MCF 10A (cell line): ENCODE measurements at regions of chr2 and their contacts with region 1.

Region 1: DNA sequence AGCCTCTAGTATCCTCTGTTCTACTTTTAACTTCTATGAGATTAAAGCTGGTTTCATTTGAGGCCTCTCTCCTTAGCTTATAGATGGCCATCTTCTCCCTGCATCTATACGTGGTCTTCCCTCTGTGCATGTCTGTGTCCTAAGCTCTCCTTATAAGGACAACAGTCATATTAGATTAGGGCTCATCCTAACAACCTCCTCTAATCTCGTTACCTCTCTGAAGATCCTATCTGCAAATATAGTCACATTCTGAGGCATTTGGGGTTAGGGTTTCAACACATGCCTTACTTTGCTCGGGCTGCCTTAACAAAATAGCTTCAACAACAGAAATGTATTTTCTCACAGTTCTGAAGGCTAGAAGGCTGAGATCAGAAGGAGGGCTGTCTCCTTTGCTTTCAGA is 11.6 kb upstream of the APOB start:
- DNase-seq: no peak
- H3K4me3 Mint-ChIP-seq: no peak overlapping the region
- H3K27ac Mint-ChIP-seq: no peak overlapping the region
- H3K4me1 Mint-ChIP-seq: no peaks in the 10 kb centered on the region
- H3K27me3 Mint-ChIP-seq: peaks cover 27% of the 10 kb centered on the region
- CTCF ChIP-seq: no peak

Region 2: DNA sequence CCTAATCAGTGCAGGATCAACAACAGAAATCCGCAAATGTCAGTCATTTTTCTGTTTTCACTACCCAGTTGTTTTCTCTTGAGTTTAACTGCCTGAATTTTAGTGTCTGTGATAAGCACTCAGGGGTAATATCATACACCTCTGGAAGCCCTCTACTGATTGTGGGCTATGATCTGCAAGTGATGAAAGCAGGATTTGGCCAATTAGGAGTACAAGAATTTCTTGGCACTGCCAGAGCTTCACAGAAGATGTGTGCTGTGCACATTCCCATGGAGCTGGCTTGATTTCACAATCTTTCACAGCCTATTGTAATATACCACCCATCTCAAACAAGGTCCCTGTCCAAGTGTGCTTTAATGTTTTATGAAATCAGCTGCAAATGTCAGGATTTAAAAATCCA is 41.0 kb after region 1 on chr2:
- CTCF ChIA-PET with region 1: no interaction called
- POLR2A ChIA-PET with region 1: no interaction called
- intact Hi-C with region 1: no loop called
- DNase-seq: peak; percentile 21
- H3K4me3 Mint-ChIP-seq: no peak overlapping the region
- H3K27ac Mint-ChIP-seq: no peak overlapping the region
- H3K4me1 Mint-ChIP-seq: no peaks in the 10 kb centered on the region
- H3K27me3 Mint-ChIP-seq: peaks cover 65% of the 10 kb centered on the region
- CTCF ChIP-seq: no peak

Region 3: DNA sequence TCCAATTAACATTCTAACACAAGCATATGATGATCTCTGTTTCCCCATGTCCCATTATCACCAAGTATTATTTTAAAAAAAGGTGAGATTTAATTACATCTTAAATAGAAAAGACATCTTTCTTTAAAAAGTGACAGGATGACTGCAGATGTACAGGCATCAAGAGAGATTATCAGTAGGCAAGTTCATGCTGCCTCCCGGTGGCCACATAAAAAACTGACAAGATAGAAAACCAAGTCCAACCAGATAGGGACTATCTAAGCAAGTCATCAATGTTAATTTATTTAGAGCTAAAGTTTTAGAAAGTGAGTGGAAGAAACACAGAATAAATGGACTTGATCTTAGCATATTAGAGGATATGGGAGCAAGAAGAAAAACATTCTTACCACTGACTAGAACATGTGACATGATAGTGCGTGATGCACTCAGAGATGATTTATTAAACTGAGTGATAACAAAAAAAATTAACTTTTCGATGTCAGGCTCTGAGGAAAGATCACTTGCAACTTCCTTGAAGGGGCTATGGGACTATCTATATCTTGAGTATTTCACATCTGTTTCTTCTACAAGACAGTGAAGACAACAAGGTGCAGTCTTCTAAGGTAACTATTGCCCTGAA is 63.0 kb after region 1 on chr2:
- CTCF ChIA-PET with region 1: interaction called, 11 read pairs
- POLR2A ChIA-PET with region 1: no interaction called
- intact Hi-C with region 1: no loop called
- DNase-seq: peak; percentile 40
- H3K4me3 Mint-ChIP-seq: no peak overlapping the region
- H3K27ac Mint-ChIP-seq: no peak overlapping the region
- H3K4me1 Mint-ChIP-seq: no peaks in the 10 kb centered on the region
- H3K27me3 Mint-ChIP-seq: peaks cover 57% of the 10 kb centered on the region
- CTCF ChIP-seq: peak; percentile 49

Region 4: DNA sequence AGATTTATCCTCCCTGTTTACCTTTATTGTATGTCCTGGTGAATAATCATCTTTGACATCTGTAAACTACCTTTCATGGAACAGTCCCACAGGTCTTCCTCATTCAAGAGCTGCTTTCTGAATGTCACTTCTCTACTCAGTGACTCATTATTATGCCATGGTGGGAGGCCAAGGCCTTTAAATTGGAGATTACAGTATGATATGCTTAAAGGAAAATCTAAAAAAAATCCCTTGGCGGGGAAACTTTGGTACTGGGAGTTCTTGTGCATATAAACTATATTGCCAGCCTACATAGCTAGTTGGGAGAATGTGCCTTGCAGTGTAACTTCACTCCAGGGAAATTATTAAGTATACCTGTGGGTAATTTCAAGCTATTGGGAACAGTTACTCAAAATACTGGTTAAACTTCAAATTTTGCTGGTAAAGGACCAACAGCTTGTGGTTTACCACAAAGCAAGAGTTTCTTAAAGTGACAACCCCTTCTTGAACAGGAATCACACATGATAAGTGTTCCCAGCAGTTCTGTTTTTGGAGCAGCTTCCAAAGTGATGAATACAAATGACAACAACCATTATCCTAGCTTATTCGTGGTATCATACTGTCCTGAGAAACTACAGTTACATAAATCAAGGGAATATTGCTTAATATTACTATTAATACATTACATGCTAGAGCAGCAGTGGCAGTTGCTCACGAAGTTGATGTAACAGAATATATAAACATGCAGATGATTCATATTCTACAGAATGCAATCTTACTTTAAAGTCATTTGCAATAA is 781.5 kb after region 1 on chr2:
- CTCF ChIA-PET with region 1: no interaction called
- POLR2A ChIA-PET with region 1: no interaction called
- intact Hi-C with region 1: no loop called
- DNase-seq: peak; percentile 66
- H3K4me3 Mint-ChIP-seq: no peak overlapping the region
- H3K27ac Mint-ChIP-seq: no peak overlapping the region
- H3K4me1 Mint-ChIP-seq: no peaks in the 10 kb centered on the region
- H3K27me3 Mint-ChIP-seq: no peaks in the 10 kb centered on the region
- CTCF ChIP-seq: no peak